Endothelial cell of umbilical vein (primary cell): ENCODE measurements at regions of chr5 and their contacts with region 1.

Region 1: DNA sequence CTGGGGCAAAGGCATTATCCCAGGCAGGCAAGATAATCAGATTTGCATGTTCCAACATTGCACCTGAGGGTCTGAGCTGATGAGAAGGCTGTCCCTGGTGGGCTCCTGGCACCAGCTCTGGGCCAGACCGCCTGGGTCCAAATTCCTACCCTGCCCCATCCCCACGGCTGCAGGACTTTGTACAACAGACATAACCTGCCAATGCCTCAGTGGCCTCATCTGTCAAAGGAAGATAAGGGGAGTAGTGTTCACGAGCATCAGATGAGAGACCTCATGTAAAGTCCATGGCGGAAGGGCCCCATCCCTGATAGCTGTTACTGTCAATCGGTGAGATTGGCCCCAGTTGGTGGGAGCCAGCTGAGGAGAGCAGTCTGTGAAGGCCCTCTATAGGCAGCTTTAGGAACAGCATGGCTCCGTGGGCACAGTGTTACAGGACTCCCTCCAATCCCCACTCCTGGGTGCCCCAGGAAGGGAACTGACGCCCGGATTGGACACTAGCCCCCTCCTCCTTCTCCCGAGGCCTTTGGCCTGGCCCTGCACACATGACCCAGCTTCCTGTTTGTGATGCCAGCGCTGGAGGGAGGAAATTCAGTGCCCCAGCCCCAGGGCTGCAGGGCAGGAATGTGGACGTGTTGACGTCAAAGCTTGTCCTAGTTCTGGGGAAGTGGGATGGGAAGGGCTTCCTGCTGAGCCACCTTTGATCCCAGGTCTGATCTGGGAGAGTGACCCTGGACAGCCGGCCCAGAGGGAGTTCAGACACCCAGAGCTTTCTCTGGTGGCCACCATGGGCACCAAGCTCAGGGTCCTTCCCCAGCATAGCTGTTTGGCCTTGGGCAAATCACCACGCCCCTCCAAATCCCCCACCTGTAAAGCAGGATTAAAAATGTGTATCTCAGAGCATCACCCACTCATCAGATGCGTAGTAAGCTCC is 56.2 kb downstream of the DUSP1 start:
- DNase-seq: peak; percentile 74
- H3K4me3 ChIP-seq: no peak overlapping the region
- H3K27ac ChIP-seq: peak overlapping the region; percentile 81
- H3K4me1 ChIP-seq: peaks cover 20% of the 10 kb centered on the region
- H3K27me3 ChIP-seq: no peaks in the 10 kb centered on the region
- CTCF ChIP-seq: peak; percentile 80 to 90
- POLR2A ChIP-seq: no peak

Region 2: GRCh38 chr5:172733131-172733973 is 18.6 kb after region 1 on chr5:
- CTCF ChIA-PET with region 1: interaction called, 11 read pairs
- POLR2A ChIA-PET with region 1: no interaction called
- dilution Hi-C with region 1: no loop called
- intact Hi-C with region 1: no loop called
- DNase-seq: peak; percentile 62
- H3K4me3 ChIP-seq: no peak overlapping the region
- H3K27ac ChIP-seq: peak overlapping the region; percentile 24
- H3K4me1 ChIP-seq: peaks cover 9% of the 10 kb centered on the region
- H3K27me3 ChIP-seq: no peaks in the 10 kb centered on the region
- CTCF ChIP-seq: no peak
- POLR2A ChIP-seq: no peak

Region 3: DNA sequence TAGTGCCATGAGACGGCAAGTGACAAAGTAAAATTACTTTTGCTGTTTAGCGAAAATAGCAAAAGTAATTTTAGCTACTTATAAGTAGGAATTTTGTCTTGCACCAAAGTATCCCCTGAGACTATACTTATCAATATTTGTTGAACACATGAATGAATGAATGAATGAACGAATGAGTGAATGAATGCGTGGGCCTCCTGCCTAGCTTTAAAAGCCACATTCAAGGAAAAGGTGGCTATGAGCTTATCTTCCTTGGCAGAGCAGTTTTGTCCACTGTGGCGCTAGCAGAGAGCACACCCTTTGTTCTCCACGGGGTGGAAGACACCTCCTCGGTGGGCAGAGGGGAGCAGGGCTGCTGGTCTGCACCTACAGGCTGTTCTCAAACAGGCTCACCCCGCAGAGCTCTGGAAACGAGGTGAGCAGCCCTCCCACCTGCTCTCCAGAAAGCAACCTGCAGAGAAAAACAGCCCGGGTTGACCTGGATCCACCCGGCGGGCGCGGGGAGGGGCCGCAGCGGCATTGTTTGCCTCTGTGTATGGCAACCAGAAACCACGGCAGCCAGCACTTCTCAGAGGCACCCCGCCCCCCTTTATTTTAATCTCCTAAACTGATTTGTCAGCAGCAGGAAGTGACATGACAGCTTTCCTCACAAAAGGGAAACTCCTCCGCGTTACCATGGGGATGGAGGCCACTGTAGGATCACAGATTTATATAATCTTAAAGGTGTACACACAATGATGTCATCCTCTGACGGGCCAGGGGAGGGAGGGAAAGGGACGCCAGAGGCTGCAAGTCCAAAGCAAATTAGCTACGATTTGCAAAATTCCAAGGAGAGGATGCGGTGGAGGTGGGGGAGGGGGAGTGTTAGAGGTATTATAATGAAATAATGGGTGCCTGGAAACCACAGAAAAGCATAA is 50.4 kb after region 1 on chr5:
- CTCF ChIA-PET with region 1: interaction called, 87 read pairs
- POLR2A ChIA-PET with region 1: interaction called, 7 read pairs
- dilution Hi-C with region 1: no loop called
- intact Hi-C with region 1: loop called (anchors 1 kb)
- DNase-seq: peak; percentile 99
- H3K4me3 ChIP-seq: peak overlapping the region in 2 of 3 experiments; percentile 16 to 28
- H3K27ac ChIP-seq: peak overlapping the region; percentile 92
- H3K4me1 ChIP-seq: peaks cover 44% of the 10 kb centered on the region
- H3K27me3 ChIP-seq: no peaks in the 10 kb centered on the region
- CTCF ChIP-seq: no peak
- POLR2A ChIP-seq: peak; percentile 16

Region 4: GRCh38 chr5:172860520-172861443 is 146.0 kb after region 1 on chr5:
- CTCF ChIA-PET with region 1: interaction called, 16 read pairs
- POLR2A ChIA-PET with region 1: no interaction called
- dilution Hi-C with region 1: no loop called
- intact Hi-C with region 1: loop called (anchors 1 kb)
- DNase-seq: peak; percentile 90
- H3K4me3 ChIP-seq: no peak overlapping the region
- H3K27ac ChIP-seq: peak overlapping the region; percentile 90
- H3K4me1 ChIP-seq: peaks cover 53% of the 10 kb centered on the region
- H3K27me3 ChIP-seq: no peaks in the 10 kb centered on the region
- CTCF ChIP-seq: no peak
- POLR2A ChIP-seq: peak; percentile 53

Region 5: DNA sequence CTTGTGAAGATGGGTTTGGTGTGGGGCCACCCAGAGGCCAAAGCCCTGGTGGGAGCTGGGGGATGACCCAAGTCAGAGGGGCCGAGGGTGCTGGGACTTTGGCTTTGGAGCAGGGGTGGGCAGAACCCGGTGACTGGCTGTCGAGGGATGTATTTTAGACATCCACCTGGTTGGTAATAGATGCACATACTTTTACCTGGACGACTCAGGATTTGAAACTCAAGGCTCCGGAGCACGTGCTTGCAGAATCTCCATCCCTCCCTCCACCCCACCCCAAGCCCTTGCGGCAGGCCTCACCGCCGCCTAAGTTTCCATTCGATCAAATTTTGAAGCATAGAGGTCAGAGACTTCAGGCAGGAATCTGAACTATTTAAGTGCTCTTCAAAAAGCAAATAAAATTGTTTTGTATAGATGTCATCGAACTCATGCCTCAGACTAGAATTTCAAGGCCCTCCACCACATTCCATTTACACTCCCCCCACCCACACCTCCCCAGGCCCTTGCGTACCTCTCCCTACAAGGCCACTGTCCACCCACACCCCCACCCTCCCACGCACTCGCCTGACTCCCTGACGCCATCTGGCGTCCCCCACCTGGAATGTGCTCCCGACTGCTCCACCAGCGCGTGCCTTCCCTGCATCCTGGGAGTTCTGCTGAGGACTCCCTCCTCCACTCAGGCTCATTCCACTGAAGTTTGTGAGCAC is 187.9 kb after region 1 on chr5:
- CTCF ChIA-PET with region 1: interaction called, 17 read pairs
- POLR2A ChIA-PET with region 1: interaction called, 3 read pairs
- dilution Hi-C with region 1: no loop called
- intact Hi-C with region 1: loop called (anchors 1 kb)
- DNase-seq: peak; percentile 46
- H3K4me3 ChIP-seq: no peak overlapping the region
- H3K27ac ChIP-seq: peak overlapping the region; percentile 72
- H3K4me1 ChIP-seq: peaks cover 43% of the 10 kb centered on the region
- H3K27me3 ChIP-seq: no peaks in the 10 kb centered on the region
- CTCF ChIP-seq: peak; percentile 15 to 54
- POLR2A ChIP-seq: no peak

Region 6: DNA sequence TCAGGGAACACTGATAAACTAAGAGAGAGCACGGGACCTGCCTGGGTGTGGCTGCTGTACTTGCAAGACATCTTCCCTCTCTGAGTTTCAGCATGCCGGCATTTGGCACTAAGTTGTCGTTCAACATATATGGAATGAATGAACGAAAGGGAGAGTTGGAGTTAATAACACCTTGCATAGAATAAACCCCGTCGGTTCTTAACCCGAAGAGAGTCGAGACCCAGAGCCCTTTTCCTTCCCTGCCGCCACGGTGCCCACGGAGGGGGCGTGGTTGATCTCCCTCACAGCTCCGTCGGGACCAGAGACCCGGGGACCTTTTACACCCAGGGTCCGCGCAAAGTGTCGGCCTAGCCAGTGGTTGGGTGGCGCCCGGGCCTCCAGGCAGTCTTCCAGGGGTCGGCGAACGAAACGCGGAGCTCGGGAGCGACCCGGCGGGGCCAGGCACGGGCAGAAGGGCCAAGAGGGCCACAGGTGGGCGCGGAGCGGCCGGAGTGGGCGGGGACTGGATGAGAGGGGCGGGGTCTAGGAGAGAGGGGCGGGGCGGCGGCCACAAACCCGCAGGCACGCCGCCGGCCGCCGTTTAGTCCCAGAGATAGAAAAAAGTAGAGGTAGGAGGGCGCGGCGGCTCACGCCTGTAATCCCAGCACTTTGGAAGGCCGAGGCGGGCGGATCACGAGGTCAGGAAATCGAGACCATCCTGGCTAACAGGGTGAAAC is 243.7 kb after region 1 on chr5:
- CTCF ChIA-PET with region 1: interaction called, 11 read pairs
- POLR2A ChIA-PET with region 1: interaction called, 3 read pairs
- dilution Hi-C with region 1: no loop called
- intact Hi-C with region 1: loop called (anchors 1 kb)
- DNase-seq: peak; percentile 58
- H3K4me3 ChIP-seq: peak overlapping the region; percentile 59 to 66 (median 63)
- H3K27ac ChIP-seq: peak overlapping the region; percentile 59
- H3K4me1 ChIP-seq: peaks cover 22% of the 10 kb centered on the region
- H3K27me3 ChIP-seq: no peaks in the 10 kb centered on the region
- CTCF ChIP-seq: no peak
- POLR2A ChIP-seq: no peak

Region 7: DNA sequence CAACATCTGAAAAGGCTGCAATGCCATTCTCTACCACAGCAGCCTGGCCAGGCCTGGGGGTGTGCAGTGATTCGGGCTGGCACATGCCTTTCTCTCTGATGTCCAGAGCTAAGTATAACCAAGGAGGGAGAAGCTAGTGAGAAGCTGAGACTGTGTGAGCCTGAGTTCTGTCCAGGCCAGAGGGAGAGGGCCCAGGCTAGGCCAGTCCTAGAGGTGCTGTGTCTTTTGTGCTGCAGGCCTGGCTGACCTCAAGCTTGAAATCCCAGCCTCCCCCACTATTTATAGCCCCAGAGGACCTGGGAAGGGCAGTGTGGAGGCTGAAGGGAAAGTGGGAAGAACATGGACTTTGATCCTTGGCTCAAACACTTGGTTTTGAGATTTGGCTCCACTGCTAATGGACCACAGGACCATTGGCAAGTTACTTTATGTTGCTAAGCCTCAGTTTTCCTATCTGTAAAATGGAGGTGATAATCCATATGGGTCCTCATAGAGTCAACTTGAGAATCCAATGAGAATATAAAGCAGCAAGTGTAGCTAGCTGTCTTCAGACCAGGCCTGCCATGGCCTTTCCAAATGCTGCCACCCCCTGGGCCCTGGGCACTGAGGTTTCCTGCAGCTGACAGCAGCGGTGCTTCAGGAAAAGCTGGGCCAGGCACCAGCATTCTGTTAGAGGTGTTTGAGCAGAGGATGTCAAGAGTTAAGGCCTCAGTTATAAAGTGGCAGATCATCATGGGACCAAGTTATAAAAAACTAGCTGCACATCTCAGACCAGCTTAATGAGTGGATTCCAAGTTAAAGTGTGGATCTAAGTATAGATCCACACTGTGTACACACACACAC is 450.6 kb after region 1 on chr5:
- CTCF ChIA-PET with region 1: no interaction called
- POLR2A ChIA-PET with region 1: no interaction called
- dilution Hi-C with region 1: no loop called
- intact Hi-C with region 1: no loop called
- DNase-seq: no peak
- H3K4me3 ChIP-seq: no peak overlapping the region
- H3K27ac ChIP-seq: no peak overlapping the region
- H3K4me1 ChIP-seq: no peaks in the 10 kb centered on the region
- H3K27me3 ChIP-seq: no peaks in the 10 kb centered on the region
- CTCF ChIP-seq: no peak
- POLR2A ChIP-seq: no peak